ENCODE measurements at regions of chr9 and their contacts with region 1.

Region 1: GRCh38 chr9:32968101-32969011 is 33.1 kb downstream of the APTX start:
- DNase-seq: peak; percentile 59
- H3K4me3 Mint-ChIP-seq: no peak overlapping the region
- H3K27ac Mint-ChIP-seq: no peak overlapping the region
- H3K4me1 Mint-ChIP-seq: no peaks in the 10 kb centered on the region
- H3K27me3 Mint-ChIP-seq: no peaks in the 10 kb centered on the region
- CTCF ChIP-seq: peak; percentile 54

Region 2: GRCh38 chr9:32703635-32704034 is 264.7 kb before region 1 on chr9:
- CTCF ChIA-PET with region 1: no interaction called
- POLR2A ChIA-PET with region 1: no interaction called
- intact Hi-C with region 1: loop called (anchors 10 kb)
- DNase-seq: peak; percentile 49
- H3K4me3 Mint-ChIP-seq: no peak overlapping the region
- H3K27ac Mint-ChIP-seq: no peak overlapping the region
- H3K4me1 Mint-ChIP-seq: peaks cover 38% of the 10 kb centered on the region
- H3K27me3 Mint-ChIP-seq: no peaks in the 10 kb centered on the region
- CTCF ChIP-seq: no peak